ENCODE measurements at regions of chr14 and their contacts with region 1.

Region 1: DNA sequence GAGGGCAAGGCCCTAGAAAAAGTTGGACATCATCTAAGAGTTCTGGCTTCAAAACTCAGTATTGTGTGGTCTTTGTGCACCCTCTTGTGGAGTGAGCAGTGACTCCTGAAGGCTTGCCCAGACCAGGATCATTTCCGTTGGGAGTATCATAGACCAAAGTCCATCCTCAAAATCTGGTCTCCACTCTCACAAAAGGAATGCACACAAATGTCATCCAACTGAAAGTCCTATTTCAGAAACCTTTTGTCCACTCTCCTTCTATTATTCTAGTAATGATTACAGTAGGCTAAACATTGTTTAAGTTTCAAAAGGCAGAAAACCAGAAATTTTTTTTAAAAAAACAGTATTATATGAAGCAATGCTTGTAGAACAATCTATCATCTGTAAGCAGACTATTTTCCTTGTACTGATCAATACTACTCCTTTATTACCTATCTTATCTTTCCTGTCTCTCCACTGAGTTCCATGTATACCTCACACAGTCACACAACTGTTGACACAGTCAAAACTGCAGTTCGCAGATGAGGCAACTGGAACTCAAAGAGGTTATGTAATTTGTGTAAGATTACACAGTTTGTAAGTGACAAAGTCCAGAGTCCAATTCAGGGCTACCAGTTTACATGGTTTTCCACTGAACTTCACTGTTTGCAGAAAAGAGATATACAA is 41.4 kb downstream of the COX16 start:
- DNase-seq: no peak

Region 2: GRCh38 chr14:70013269-70013873 is 304.7 kb before region 1 on chr14:
- intact Hi-C with region 1: no loop called
- DNase-seq: peak; percentile 59

Region 3: GRCh38 chr14:70043001-70043400 is 275.1 kb before region 1 on chr14:
- intact Hi-C with region 1: loop called (anchors 5 kb)
- DNase-seq: no peak

Region 4: DNA sequence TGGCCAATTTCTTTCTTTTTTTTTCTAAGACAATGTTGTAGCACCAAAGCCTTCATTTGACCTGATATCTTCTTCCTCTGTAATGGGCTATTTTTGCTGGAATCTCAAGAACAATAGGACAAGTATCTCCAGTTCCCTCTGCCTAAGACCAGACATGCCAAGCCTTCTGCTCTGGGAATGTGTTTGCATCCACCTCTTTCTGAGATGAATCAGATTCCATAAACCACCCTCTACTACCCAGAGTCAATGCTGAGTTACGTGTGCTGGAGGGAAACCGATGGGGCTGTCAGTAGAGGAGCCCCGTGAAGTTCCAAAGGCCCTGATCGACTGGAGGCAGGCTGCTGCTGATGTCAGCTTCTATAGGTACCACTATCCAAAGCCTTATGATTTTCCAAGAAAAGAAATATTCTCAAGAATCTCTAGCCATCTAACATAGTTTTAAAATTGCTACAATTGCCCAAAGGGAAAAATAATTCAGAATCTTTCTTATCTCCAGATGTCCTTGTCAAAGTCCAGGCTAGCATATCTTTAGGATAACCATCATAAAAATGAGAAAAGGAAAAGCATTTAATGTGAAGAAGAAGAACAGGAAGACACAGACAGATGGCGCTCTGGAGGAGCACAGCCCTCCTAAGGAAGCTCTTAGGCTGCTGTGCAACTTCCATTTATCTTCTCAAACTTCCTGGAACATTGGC is 231.3 kb before region 1 on chr14:
- intact Hi-C with region 1: loop called (anchors 5 kb)
- DNase-seq: no peak

Measured in cardiac septum (tissue), 1 donor.